ENCODE measurements at regions of chr17 and their contacts with region 1.

Region 1: GRCh38 chr17:69414408-69415274 is at the start of gene MAP2K6:
- DNase-seq: peak; percentile 81 to 82
- ATAC-seq: peak; percentile 96 to 99 (median 98)
- H3K4me3 ChIP-seq: peak within 1 kb of the TSS; percentile 24 to 76 (median 54)
- H3K27ac ChIP-seq: peak within 1 kb of the TSS in 7 of 10 donors; percentile 6 to 66 (median 35)
- H3K4me1 ChIP-seq: peaks cover 0 to 40% (median 30%) of the 10 kb centered on the region in 9 donors
- H3K27me3 ChIP-seq: no peaks in the 10 kb centered on the region
- CTCF ChIP-seq: no peak
- total RNA-seq, gene MAP2K6: 0.89 to 4.0 (median 2.4) TPM

Region 2: DNA sequence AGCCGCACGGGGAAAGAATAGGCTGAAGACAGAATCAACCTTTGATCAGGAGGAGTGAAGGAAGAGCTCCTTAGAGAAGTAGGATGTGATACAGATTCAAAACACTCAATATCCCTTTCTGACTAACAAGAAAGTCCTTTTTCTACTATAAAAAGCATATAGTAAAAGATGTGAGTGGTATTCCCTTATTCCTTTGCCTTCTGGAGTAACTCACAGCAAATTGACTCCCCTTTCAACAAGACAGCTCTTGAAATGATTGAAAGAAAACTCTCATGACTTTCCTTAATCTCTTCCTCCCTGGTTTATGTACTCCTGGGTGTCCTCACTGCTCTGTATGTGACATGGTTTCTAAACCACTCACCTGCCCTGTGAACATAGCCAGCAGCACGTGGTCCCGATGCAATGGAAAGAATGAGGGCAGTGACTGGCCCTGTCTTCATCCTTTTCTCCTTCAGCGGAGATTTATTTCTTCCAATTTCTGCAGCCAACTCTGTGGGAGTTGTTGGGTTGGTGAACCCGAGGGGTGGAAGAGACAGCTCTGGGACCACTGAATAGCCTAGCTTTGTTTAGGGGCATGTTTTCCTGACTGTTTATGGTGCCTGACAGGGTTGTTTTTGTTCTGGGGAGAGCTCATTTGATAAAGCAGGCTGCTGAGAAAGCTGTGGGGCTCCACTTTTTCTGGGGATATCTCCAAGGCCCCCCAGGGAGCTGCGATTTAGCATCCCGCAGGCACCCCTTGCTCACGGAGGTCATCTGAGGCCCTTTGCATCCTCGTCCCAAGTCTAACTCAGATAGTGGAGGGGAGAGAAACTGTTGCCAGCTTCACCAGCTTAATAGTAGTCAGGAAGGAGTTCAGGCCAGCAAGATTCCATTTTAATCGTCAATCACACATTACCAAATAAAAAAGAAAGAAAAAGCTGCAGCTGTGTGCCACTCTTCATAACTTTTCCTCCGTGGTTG is 46.6 kb after region 1 on chr17:
- intact Hi-C with region 1: no loop called
- DNase-seq: no peak
- ATAC-seq: peak in 2 of 8 donors; percentile 39 to 46
- H3K4me3 ChIP-seq: no peak overlapping the region
- H3K27ac ChIP-seq: no peak overlapping the region
- H3K4me1 ChIP-seq: peaks cover 0 to 10% (median 0%) of the 10 kb centered on the region in 9 donors
- H3K27me3 ChIP-seq: no peaks in the 10 kb centered on the region
- CTCF ChIP-seq: no peak

Region 3: DNA sequence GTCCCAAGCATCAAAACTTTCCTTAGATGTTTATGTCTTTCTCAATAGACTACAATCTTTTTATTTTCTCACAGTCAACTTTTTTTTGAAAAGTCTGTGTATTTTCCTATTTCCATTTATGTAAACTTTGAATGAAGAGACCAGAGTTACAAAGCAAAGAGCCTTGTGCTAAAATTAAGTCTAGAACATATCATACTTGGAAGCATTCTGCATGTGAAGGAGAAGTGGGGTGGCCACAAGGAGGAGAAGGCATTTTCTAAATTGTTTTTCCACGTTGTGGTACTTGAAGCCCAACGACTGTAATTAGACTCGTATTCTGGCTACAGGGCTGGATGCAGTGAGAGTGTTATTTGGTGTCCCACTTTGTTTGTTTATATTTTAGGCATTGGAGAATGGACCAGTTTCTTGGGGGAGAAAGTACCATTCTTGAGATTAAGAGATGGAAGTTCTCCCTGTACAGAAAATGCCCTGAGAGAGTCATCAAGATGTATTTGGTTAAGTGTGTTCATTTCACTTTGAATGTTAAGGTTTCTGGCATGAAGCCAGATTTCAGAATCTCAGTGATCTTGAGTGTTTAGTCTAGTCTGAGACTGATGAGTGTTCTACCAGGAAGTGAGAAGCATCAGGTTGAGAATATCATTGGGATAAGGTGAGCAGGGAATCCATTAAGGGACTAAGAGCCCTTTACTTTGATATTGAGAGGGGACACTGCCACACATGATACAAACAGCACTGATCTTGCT is 71.4 kb after region 1 on chr17:
- intact Hi-C with region 1: loop called in 1 of 10 experiments (anchors 10 kb)
- DNase-seq: no peak
- ATAC-seq: peak in 5 of 8 donors; percentile 17 to 59 (median 38)
- H3K4me3 ChIP-seq: no peak overlapping the region
- H3K27ac ChIP-seq: peak overlapping the region in 8 of 10 donors; percentile 26 to 67 (median 54)
- H3K4me1 ChIP-seq: peaks cover 0 to 33% (median 11%) of the 10 kb centered on the region in 9 donors
- H3K27me3 ChIP-seq: no peaks in the 10 kb centered on the region
- CTCF ChIP-seq: no peak

Region 4: GRCh38 chr17:69501591-69502468 is 87.2 kb after region 1 on chr17:
- intact Hi-C with region 1: loop called in 1 of 10 experiments (anchors 10 kb)
- DNase-seq: peak in 1 of 2 donors; percentile 22
- ATAC-seq: peak; percentile 46 to 76 (median 60)
- H3K4me3 ChIP-seq: peak overlapping the region in 8 of 10 donors; percentile 1 to 39 (median 37)
- H3K27ac ChIP-seq: peak overlapping the region in 7 of 10 donors; percentile 9 to 77 (median 44)
- H3K4me1 ChIP-seq: peaks cover 0 to 26% (median 14%) of the 10 kb centered on the region in 9 donors
- H3K27me3 ChIP-seq: no peaks in the 10 kb centered on the region
- CTCF ChIP-seq: no peak

Region 5: GRCh38 chr17:69523244-69523861 is 108.7 kb after region 1 on chr17:
- intact Hi-C with region 1: loop called in 2 of 10 experiments (anchors 10 kb)
- DNase-seq: peak in 1 of 2 donors; percentile 21
- ATAC-seq: peak in 5 of 8 donors; percentile 61 to 75 (median 65)
- H3K4me3 ChIP-seq: peak overlapping the region in 1 of 10 donors; percentile 6
- H3K27ac ChIP-seq: no peak overlapping the region
- H3K4me1 ChIP-seq: peaks cover 0 to 6% (median 0%) of the 10 kb centered on the region in 9 donors
- H3K27me3 ChIP-seq: no peaks in the 10 kb centered on the region
- CTCF ChIP-seq: peak; percentile 48 to 73 (median 69)